Posterior vena cava (tissue), 2 donors: ENCODE measurements at regions of chr9 and their contacts with region 1.

Region 1: GRCh38 chr9:84953797-84954705 is 284.5 kb downstream of the NTRK2 start:
- DNase-seq: peak; percentile 94

Region 2: DNA sequence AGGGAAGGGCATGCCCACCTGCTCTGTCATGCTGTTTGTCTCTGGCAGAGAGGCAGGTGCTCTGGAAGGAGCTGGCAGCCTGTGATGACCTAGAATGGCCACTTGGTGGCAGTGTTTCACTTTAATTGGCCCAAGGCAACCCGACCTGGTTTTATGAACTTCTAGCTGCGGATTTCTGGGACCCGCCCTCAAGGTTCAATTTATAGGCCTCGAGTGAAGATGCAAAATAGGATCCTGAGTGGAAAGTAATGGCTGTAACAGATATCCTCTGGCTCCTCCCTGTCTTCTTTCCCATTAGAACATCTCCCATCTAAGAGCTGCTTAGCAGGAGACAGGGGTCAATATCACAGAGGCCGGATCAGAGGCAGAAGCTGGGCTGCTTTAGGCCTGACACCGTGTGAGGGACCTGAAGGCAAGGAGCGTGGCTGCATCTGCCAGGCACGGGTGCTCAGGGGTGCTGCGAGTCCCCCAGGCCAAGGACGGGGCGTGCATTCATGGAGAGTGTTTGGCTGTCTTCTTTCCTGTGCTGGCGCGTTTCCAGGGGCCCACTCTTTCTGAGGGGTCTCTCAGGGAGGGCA is 556.8 kb before region 1 on chr9:
- intact Hi-C with region 1: loop called in 1 of 2 experiments (anchors 10 kb)
- DNase-seq: peak; percentile 82

Region 3: GRCh38 chr9:84697509-84698114 is 256.4 kb before region 1 on chr9:
- intact Hi-C with region 1: loop called in 1 of 2 experiments (anchors 10 kb)
- DNase-seq: peak; percentile 88

Region 4: GRCh38 chr9:84785792-84786547 is 168.1 kb before region 1 on chr9:
- intact Hi-C with region 1: no loop called
- DNase-seq: no peak